ENCODE measurements at regions of chrX and their contacts with region 1.

Region 1: DNA sequence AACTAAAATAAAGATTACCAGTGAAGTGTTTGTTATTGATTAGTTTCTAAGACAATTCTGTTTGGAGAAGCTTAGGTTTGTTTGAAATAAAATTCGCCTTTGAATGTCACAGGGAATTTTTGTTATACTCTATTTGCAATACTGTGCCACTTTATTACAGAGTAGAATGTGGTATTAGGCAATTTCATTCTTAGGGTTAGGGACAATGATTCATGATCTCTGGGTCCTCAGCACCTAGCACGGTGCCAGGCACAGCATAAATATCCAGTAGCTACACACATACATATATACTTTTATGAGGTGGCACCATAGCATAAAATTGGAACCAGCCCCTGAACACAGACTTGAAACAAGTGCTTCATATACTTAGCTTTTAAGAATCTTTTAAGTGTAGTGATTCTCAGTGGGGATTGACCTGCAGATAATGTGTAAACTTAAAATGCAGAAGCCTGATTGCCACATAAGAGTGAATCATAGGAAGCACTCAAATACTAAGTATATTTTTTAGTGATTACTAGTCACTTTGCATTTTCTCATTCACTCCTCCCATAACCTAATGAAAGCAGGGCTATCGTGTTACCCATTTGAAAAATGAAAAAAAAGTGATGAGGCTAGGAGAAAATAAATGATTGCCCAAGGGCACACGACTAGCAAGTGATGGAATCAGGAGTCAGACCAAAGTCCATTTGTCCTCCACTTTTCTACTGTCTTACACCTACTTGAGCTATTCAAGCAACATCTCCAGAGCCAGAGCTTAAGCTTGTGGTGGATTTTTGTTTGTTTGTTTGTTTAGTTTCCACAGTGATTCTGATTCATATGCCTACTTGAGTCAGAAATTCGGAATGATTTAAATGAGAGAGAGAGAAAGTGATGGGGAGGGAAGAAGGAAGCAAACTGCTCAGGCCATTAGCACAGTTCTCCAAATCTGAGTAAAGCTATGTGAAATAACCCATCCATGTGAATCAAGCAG is 366.0 kb upstream of the FGF13 start:
- DNase-seq: no peak
- ATAC-seq: peak in 3 of 4 donors; percentile 60 to 74 (median 65)
- H3K4me3 ChIP-seq: no peak overlapping the region
- H3K27ac ChIP-seq: no peak overlapping the region
- H3K4me1 ChIP-seq: no peaks in the 10 kb centered on the region
- H3K27me3 ChIP-seq: no peaks in the 10 kb centered on the region
- CTCF ChIP-seq: no peak

Region 2: DNA sequence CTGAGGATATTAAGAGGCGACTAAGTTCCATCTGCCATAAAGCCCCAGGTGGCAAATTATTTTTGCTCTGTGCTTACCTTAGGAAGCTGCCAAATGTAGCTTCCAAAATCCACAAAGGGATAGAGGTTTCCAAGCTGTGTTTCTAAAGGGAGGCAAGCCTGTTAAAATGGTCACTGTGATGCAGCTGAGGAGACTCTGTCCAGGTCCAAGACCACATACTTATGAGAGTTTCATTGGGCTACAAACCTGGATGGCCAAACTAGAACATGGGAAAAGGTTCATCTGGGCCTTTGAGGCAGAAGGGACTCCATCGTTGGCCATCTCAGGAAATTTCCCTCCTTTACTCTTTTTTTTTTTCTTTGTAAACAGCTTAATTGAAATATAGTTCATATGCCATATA is 59.1 kb before region 1 on chrX:
- intact Hi-C with region 1: loop called in 1 of 2 experiments (anchors 10 kb)
- DNase-seq: no peak
- ATAC-seq: no peak
- H3K4me3 ChIP-seq: no peak overlapping the region
- H3K27ac ChIP-seq: no peak overlapping the region
- H3K4me1 ChIP-seq: no peaks in the 10 kb centered on the region
- H3K27me3 ChIP-seq: no peaks in the 10 kb centered on the region
- CTCF ChIP-seq: no peak

Measured in psoas muscle (tissue), 8 donors.